ENCODE measurements at regions of chr7 and their contacts with region 1.

Region 1: GRCh38 chr7:73718905-73719805 is at the start of gene STX1A:
- DNase-seq: peak; percentile 82
- ATAC-seq: peak; percentile 89
- H3K4me3 ChIP-seq: peak within 1 kb of the TSS; percentile 15 to 70 (median 59)
- H3K4me3 Mint-ChIP-seq: peak within 1 kb of the TSS; percentile 83
- H3K27ac ChIP-seq: no peak within 1 kb of the TSS
- H3K27ac Mint-ChIP-seq: peak within 1 kb of the TSS; percentile 37
- H3K4me1 ChIP-seq: peaks cover 25 to 31% of the 10 kb centered on the region in 2 donors
- H3K4me1 Mint-ChIP-seq: peaks cover 20% of the 10 kb centered on the region
- H3K27me3 ChIP-seq: peaks cover 0 to 57% (median 25%) of the 10 kb centered on the region in 4 experiments
- H3K27me3 Mint-ChIP-seq: peaks cover 27% of the 10 kb centered on the region
- CTCF ChIP-seq: no peak
- total RNA-seq, gene STX1A: 3.0 and 3.1 TPM in 2 replicates

Region 2: GRCh38 chr7:73329861-73330581 is 389.1 kb before region 1 on chr7:
- CTCF ChIA-PET with region 1: no interaction called
- POLR2A ChIA-PET with region 1: no interaction called
- intact Hi-C with region 1: no loop called
- DNase-seq: no peak
- ATAC-seq: no peak
- H3K4me3 ChIP-seq: no peak overlapping the region
- H3K4me3 Mint-ChIP-seq: no peak overlapping the region
- H3K27ac ChIP-seq: no peak overlapping the region
- H3K27ac Mint-ChIP-seq: no peak overlapping the region
- H3K4me1 ChIP-seq: no peaks in the 10 kb centered on the region
- H3K4me1 Mint-ChIP-seq: no peaks in the 10 kb centered on the region
- H3K27me3 ChIP-seq: no peaks in the 10 kb centered on the region
- H3K27me3 Mint-ChIP-seq: peaks cover 4% of the 10 kb centered on the region
- CTCF ChIP-seq: no peak

Region 3: GRCh38 chr7:73667344-73668102 is 51.6 kb before region 1 on chr7 and contains the start of gene VPS37D:
- CTCF ChIA-PET with region 1: no interaction called
- POLR2A ChIA-PET with region 1: no interaction called
- intact Hi-C with region 1: loop called (anchors 2 kb)
- DNase-seq: peak; percentile 94
- ATAC-seq: peak; percentile 94
- H3K4me3 ChIP-seq: peak within 1 kb of the TSS in 4 of 5 experiments; percentile 39 to 59 (median 48)
- H3K4me3 Mint-ChIP-seq: peak within 1 kb of the TSS; percentile 83
- H3K27ac ChIP-seq: no peak within 1 kb of the TSS
- H3K27ac Mint-ChIP-seq: peak within 1 kb of the TSS; percentile 20
- H3K4me1 ChIP-seq: peaks cover 8 to 16% of the 10 kb centered on the region in 2 donors
- H3K4me1 Mint-ChIP-seq: peaks cover 8% of the 10 kb centered on the region
- H3K27me3 ChIP-seq: peaks cover 0 to 55% (median 21%) of the 10 kb centered on the region in 4 experiments
- H3K27me3 Mint-ChIP-seq: peaks cover 42% of the 10 kb centered on the region
- CTCF ChIP-seq: peak; percentile 73
- total RNA-seq, gene VPS37D: 0.71 and 0.78 TPM in 2 replicates

Region 4: GRCh38 chr7:73707142-73707595 is 12.0 kb before region 1 on chr7:
- CTCF ChIA-PET with region 1: interaction called, 3 read pairs
- POLR2A ChIA-PET with region 1: interaction called, 4 read pairs
- intact Hi-C with region 1: loop called (anchors 1 kb)
- DNase-seq: peak; percentile 72
- ATAC-seq: peak; percentile 82
- H3K4me3 ChIP-seq: peak overlapping the region in 1 of 5 experiments; percentile 7
- H3K4me3 Mint-ChIP-seq: peak overlapping the region; percentile 53
- H3K27ac ChIP-seq: no peak overlapping the region
- H3K27ac Mint-ChIP-seq: peak overlapping the region; percentile 50
- H3K4me1 ChIP-seq: peaks cover 18 to 22% of the 10 kb centered on the region in 2 donors
- H3K4me1 Mint-ChIP-seq: peaks cover 25% of the 10 kb centered on the region
- H3K27me3 ChIP-seq: peaks cover 0 to 10% (median 0%) of the 10 kb centered on the region in 4 experiments
- H3K27me3 Mint-ChIP-seq: peaks cover 1% of the 10 kb centered on the region
- CTCF ChIP-seq: no peak

Region 5: DNA sequence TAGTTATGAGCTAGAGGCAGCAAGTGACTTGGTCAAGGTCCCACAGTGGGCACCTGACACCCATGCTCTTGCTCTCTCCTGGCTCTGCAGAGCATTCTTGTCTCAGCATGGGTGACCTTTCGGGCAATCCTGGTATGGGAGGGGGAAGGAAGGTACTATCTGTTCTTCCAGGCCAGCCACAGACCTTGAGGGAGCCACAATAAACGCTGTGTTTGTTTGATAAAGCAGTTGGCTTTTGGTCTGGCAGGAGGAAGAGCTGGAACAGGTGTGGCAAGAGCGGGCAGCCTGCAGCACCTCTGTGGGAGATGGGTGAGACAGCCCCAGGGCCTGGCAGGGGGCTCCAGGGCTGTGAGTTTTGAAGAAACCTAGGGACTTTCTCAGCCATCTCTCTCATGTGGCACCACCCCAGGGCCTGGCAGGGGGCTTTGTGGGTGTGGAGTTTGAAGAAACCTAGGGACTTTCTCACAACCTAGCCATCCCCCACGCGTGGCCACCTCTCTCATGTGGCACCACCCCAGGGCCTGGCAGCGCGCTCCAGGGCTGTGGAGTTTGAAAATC is 39.5 kb after region 1 on chr7:
- CTCF ChIA-PET with region 1: no interaction called
- POLR2A ChIA-PET with region 1: no interaction called
- intact Hi-C with region 1: no loop called
- DNase-seq: no peak
- ATAC-seq: no peak
- H3K4me3 ChIP-seq: no peak overlapping the region
- H3K4me3 Mint-ChIP-seq: no peak overlapping the region
- H3K27ac ChIP-seq: no peak overlapping the region
- H3K27ac Mint-ChIP-seq: no peak overlapping the region
- H3K4me1 ChIP-seq: no peaks in the 10 kb centered on the region
- H3K4me1 Mint-ChIP-seq: no peaks in the 10 kb centered on the region
- H3K27me3 ChIP-seq: no peaks in the 10 kb centered on the region
- H3K27me3 Mint-ChIP-seq: no peaks in the 10 kb centered on the region
- CTCF ChIP-seq: no peak

Region 6: GRCh38 chr7:74043523-74043951 is 324.4 kb after region 1 on chr7:
- CTCF ChIA-PET with region 1: no interaction called
- POLR2A ChIA-PET with region 1: no interaction called
- intact Hi-C with region 1: no loop called
- DNase-seq: no peak
- ATAC-seq: no peak
- H3K4me3 ChIP-seq: no peak overlapping the region
- H3K4me3 Mint-ChIP-seq: no peak overlapping the region
- H3K27ac ChIP-seq: no peak overlapping the region
- H3K27ac Mint-ChIP-seq: no peak overlapping the region
- H3K4me1 ChIP-seq: no peaks in the 10 kb centered on the region
- H3K4me1 Mint-ChIP-seq: no peaks in the 10 kb centered on the region
- H3K27me3 ChIP-seq: no peaks in the 10 kb centered on the region
- H3K27me3 Mint-ChIP-seq: peaks cover 4% of the 10 kb centered on the region
- CTCF ChIP-seq: no peak